Sigmoid colon (tissue), 7 donors: ENCODE measurements at regions of chr5 and their contacts with region 1.

Region 1: DNA sequence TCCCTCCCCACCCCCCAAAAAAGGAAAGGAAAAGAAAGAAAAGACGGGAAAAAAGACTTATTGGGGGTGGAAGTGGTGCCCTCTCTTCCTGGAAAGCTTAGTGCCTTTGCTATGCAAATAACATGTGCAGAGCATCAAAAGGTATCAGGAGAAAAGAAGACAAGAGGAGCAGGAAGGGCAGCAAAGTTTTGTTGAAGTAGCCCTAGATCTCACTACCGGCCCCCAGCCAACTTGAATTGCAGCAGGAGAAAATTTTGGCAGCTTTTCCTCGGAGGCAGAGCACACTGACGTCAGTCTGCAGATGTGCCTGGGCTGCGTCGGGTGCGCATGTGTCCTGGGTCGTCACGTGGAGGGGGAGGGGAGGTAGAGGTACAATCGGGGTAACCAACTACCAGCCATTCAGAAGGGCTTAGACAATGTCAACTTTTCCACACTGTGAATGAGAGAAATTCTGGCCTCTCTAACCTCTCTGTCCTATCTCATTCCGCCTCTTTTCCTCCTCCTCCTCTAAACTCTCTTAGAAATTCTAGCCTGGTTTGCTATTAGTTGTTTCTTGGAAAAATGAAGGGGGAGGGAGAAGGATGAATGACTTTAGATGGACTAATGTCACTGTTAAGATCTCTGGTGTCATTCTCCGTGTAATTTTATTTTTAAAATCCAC is at the start of gene ADAMTS6:
- DNase-seq: peak; percentile 98
- H3K4me3 ChIP-seq: peak within 1 kb of the TSS; percentile 47 to 63 (median 56)
- H3K27ac ChIP-seq: peak within 1 kb of the TSS; percentile 90 to 97 (median 93)
- H3K4me1 ChIP-seq: peaks cover 0 to 36% (median 17%) of the 10 kb centered on the region in 4 donors
- H3K27me3 ChIP-seq: no peaks in the 10 kb centered on the region
- CTCF ChIP-seq: no peak
- EP300 ChIP-seq: peak; percentile 70 to 95 (median 88)
- POLR2A ChIP-seq: peak in 1 of 2 donors; percentile 23
- total RNA-seq, gene ADAMTS6: 3.7 to 18.3 (median 8.2) TPM

Region 2: DNA sequence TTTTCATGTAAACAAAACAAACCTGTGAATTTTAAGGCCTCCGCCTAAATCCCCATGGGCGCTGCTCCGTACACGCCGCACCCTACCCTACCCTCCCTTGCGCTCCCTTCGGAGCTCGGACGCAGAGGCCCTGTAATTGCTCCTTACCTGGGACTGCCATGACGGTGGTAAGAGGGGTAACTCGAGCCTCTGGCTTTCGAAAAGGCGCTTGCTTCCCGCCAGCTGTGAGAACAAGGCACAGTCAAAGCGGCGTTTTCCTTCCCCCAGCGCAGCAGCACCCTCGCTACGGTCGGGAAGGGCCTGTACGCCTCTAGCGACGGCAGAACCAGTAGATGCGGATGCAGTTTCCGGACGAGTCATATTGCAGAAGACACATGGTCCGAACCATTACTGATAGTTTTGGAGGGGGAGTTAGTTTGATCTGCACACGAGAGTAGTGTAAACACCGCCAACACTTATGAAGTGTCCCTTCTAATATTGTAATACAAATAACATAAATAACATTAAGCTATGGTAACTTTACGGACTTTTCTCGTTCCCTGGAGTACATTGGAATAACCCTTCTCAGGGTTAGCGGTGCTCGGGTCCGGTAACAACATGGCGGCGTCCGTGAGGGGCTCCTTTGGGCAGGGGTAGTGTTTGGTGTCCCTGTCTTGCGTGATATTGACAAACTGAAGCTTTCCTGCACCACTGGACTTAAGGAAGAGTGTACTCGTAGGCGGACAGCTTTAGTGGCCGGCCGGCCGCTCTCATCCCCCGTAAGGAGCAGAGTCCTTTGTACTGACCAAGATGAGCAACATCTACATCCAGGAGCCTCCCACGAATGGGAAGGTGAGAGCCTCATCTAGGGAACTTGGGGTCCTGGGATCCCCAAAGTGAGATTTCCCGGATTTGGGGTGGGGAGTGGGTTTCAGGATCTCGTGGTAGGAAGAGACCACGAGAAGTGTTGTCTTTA is 713.1 kb before region 1 on chr5 and contains the starts of genes CWC27 and SREK1IP1:
- intact Hi-C with region 1: loop called (anchors 5 kb)
- DNase-seq: peak; percentile 87
- H3K4me3 ChIP-seq: peak within 1 kb of the TSS; percentile 64 to 74 (median 72)
- H3K27ac ChIP-seq: peak within 1 kb of the TSS; percentile 79 to 86 (median 84)
- H3K4me1 ChIP-seq: peaks cover 0 to 41% (median 34%) of the 10 kb centered on the region in 4 donors
- H3K27me3 ChIP-seq: no peaks in the 10 kb centered on the region
- CTCF ChIP-seq: no peak
- EP300 ChIP-seq: no peak
- POLR2A ChIP-seq: peak; percentile 54 to 58
- total RNA-seq, gene CWC27: 18.9 to 27.7 (median 19.7) TPM
- total RNA-seq, gene SREK1IP1: 12.3 to 20.8 (median 14.0) TPM

Region 3: GRCh38 chr5:64811050-64811640 is 670.6 kb before region 1 on chr5:
- intact Hi-C with region 1: loop called (anchors 2 kb)
- DNase-seq: no peak
- H3K4me3 ChIP-seq: no peak overlapping the region
- H3K27ac ChIP-seq: no peak overlapping the region
- H3K4me1 ChIP-seq: peaks cover 0 to 6% (median 0%) of the 10 kb centered on the region in 4 donors
- H3K27me3 ChIP-seq: no peaks in the 10 kb centered on the region
- CTCF ChIP-seq: peak; percentile 39 to 58 (median 50)
- EP300 ChIP-seq: no peak
- POLR2A ChIP-seq: no peak

Region 4: DNA sequence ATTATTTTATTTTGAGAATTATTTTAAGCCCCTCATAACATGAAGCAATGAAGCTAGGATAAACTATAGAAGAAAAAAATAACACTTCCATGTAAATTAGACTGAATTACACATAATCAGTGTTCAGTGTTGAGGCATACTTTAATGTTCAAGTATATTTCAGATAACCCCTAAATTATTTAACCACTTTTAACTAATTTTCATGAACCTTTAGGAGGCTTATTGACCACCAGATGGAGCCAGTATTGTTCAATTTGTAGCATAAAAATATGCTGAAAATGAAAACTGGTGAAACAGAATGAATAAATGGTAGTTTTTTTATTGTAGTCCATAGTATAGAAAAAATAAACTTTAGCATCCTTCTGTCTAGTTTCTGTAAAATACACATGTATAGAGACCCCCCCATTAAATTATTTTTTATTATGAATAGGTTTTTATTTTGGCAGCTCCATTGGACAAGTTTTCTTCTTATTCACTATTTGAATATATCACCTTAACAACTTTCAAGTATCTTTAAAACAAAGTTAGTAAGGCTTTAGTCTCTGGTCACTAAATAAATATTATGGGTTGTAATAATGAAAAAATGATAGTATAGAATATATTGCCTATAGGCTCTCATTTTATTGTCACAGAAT is 522.9 kb before region 1 on chr5:
- intact Hi-C with region 1: loop called (anchors 2 kb)
- DNase-seq: no peak
- H3K4me3 ChIP-seq: no peak overlapping the region
- H3K27ac ChIP-seq: no peak overlapping the region
- H3K4me1 ChIP-seq: no peaks in the 10 kb centered on the region
- H3K27me3 ChIP-seq: no peaks in the 10 kb centered on the region
- CTCF ChIP-seq: peak in 3 of 4 experiments; percentile 24 to 46 (median 35)
- EP300 ChIP-seq: no peak
- POLR2A ChIP-seq: no peak

Region 5: DNA sequence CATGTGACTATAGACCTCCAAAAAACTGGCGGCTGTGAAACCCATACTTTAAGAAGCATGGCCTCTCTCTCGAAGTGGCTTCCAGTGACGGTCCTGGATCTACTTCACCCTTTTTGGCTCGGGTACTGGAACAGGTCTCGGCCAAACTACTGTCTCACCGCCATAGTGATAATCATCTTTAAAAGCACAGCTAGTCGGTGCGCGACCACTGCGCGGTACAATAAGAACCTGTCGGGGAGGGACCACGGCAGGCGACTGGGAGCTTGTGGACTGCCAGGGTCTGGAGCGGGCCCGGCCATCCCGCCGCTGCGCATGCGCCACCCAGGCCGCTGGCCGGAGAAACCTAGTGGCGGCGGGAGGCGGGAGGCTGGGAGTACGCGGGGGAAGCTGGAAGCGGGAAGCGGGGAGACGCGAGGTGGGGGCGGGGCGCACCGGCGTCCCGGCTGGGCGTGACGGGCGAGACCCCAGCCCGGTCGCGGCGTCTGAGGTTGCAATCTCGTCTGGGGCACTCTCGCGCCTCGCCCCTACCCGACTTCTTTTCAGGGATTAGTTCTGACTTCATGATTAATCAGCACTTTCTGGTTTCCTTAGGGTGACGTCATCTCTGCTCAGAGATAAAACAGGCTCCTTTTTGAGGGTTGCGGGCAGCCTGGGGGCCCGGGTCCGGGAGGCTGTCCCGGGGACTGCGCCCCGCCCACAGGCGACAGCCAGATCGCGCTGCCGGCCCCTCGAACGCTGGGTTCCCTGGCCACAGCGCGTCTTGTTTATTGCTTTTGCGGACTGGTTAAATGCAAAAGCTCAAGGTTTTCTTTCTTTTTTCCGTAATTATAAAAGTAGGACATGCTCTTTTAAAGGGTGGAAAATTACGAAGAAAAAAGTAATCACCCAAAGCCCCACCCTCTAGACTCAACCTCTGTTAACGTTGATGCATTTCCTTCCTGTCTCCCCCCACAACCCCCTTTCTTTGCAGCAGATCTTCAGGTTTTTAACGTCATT is 446.3 kb before region 1 on chr5:
- intact Hi-C with region 1: loop called (anchors 2 kb)
- DNase-seq: peak; percentile 96
- H3K4me3 ChIP-seq: peak overlapping the region; percentile 55 to 67 (median 64)
- H3K27ac ChIP-seq: peak overlapping the region; percentile 91 to 93 (median 92)
- H3K4me1 ChIP-seq: peaks cover 0 to 43% (median 28%) of the 10 kb centered on the region in 4 donors
- H3K27me3 ChIP-seq: no peaks in the 10 kb centered on the region
- CTCF ChIP-seq: no peak
- EP300 ChIP-seq: peak in 2 of 4 donors; percentile 1 to 76
- POLR2A ChIP-seq: peak in 1 of 2 donors; percentile 29

Region 6: GRCh38 chr5:65102828-65103711 is 378.7 kb before region 1 on chr5:
- intact Hi-C with region 1: loop called (anchors 2 kb)
- DNase-seq: peak; percentile 85
- H3K4me3 ChIP-seq: peak overlapping the region; percentile 49 to 66 (median 59)
- H3K27ac ChIP-seq: peak overlapping the region; percentile 78 to 86 (median 82)
- H3K4me1 ChIP-seq: peaks cover 0 to 6% (median 5%) of the 10 kb centered on the region in 4 donors
- H3K27me3 ChIP-seq: no peaks in the 10 kb centered on the region
- CTCF ChIP-seq: peak in 2 of 4 experiments; percentile 41 to 42
- EP300 ChIP-seq: no peak
- POLR2A ChIP-seq: no peak

Region 7: GRCh38 chr5:65562731-65563701 is 81.3 kb after region 1 on chr5 and contains the starts of genes CENPK and PPWD1:
- intact Hi-C with region 1: loop called (anchors 5 kb)
- DNase-seq: peak; percentile 97
- H3K4me3 ChIP-seq: peak within 1 kb of the TSS; percentile 75 to 91 (median 84)
- H3K27ac ChIP-seq: peak within 1 kb of the TSS; percentile 80 to 88 (median 87)
- H3K4me1 ChIP-seq: peaks cover 0 to 29% (median 22%) of the 10 kb centered on the region in 4 donors
- H3K27me3 ChIP-seq: no peaks in the 10 kb centered on the region
- CTCF ChIP-seq: no peak
- EP300 ChIP-seq: peak in 1 of 4 donors; percentile 20
- POLR2A ChIP-seq: peak; percentile 39 to 65
- total RNA-seq, gene CENPK: 1.4 to 1.8 TPM in 2 of 4 donors, not detected in the others
- total RNA-seq, gene PPWD1: 50.2 to 91.1 (median 78.1) TPM